Transverse colon (tissue), 4 donors: ENCODE measurements at regions of chr5 and their contacts with region 1.

Region 1: GRCh38 chr5:126594676-126595485 is at the start of gene ALDH7A1:
- DNase-seq: peak; percentile 90
- H3K4me3 ChIP-seq: peak within 1 kb of the TSS; percentile 9 to 67 (median 50)
- H3K27ac ChIP-seq: peak within 1 kb of the TSS; percentile 79 to 87 (median 83)
- H3K4me1 ChIP-seq: peaks cover 9 to 22% (median 14%) of the 10 kb centered on the region in 4 donors
- H3K27me3 ChIP-seq: no peaks in the 10 kb centered on the region
- CTCF ChIP-seq: peak in 4 of 5 experiments; percentile 21 to 38 (median 30)
- EP300 ChIP-seq: no peak
- POLR2A ChIP-seq: peak; percentile 51
- total RNA-seq, gene ALDH7A1: 9.8 to 33.3 (median 15.1) TPM

Region 2: DNA sequence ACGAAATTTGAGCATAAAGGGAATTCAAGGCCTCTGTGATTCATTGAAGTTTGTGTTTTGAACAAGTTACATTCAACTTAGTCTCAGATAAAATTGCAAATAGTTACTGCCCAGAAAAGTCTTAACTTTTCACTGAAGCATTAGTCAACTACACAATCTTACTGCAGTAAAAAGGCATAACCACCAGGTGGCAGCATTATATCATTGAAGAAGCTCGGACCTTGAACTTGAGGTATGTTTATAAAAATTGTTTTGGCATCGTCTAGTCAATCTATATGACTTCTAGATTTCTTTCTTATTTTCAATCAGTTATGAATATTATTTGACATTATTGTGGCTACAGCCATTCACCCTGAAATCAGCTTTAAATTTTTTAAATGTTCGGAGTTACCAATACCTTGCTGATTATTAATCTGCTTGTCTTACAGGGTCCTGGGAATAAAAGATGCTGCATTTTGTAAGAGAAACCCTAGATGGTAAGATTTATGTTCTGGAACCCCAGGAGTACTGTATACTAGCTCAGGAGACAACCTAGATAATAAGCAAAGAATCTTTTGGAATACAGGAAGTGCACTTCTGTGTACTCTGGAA is 255.6 kb before region 1 on chr5:
- in situ Hi-C with region 1: no loop called
- intact Hi-C with region 1: loop called (anchors 5 kb)
- DNase-seq: peak; percentile 38
- H3K4me3 ChIP-seq: no peak overlapping the region
- H3K27ac ChIP-seq: no peak overlapping the region
- H3K4me1 ChIP-seq: peaks cover 0 to 4% (median 0%) of the 10 kb centered on the region in 4 donors
- H3K27me3 ChIP-seq: no peaks in the 10 kb centered on the region
- CTCF ChIP-seq: peak; percentile 86 to 89 (median 88)
- EP300 ChIP-seq: no peak
- POLR2A ChIP-seq: no peak

Region 3: DNA sequence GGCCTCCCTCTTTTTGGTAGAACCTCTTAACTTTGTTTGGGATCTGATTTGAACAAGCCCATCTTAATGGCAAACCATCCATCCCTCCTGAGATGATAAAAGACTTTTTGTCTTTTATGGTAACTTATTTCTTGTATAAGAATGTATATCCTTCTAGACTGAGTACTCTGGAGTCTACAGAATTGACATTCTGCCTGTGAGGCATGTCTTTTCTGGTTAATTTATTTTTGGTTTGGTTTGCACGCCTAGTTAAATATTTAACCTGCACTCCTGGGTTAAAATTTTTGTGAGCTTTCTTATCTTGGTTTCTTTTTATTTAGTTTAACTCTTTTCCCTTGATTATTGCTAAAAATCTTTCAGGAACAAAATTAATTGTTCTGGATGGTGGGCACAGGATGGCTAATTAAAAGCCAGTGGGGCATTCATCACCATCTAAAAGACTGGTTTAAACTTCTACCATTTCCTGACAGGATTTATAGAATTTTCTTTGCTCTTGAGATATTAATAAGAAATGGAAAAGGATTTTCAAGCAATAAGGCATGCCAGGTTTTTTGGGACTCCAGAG is 56.2 kb after region 1 on chr5:
- in situ Hi-C with region 1: no loop called
- intact Hi-C with region 1: no loop called
- DNase-seq: no peak
- H3K4me3 ChIP-seq: no peak overlapping the region
- H3K27ac ChIP-seq: peak overlapping the region; percentile 7 to 88 (median 77)
- H3K4me1 ChIP-seq: peaks cover 0 to 53% (median 26%) of the 10 kb centered on the region in 4 donors
- H3K27me3 ChIP-seq: no peaks in the 10 kb centered on the region
- CTCF ChIP-seq: no peak
- EP300 ChIP-seq: no peak
- POLR2A ChIP-seq: no peak

Region 4: DNA sequence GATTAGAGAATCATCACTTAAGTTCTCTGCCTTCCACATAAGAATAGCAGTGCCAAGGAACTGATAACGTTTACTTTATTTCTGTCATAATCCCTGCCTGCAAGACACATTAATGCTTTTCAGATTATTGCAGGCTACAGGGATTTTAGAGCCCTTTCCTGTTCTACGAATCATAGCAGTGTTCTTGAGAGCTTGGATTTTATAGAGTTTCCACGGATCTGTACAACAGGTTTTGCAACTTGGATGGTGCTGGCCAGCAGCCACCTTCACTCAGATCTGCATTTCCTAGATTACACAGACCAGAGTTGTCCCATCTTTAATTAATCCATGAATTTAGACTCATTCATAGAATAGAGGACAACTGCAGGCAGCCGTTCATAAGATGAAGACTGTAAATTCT is 1526.8 kb after region 1 on chr5:
- in situ Hi-C with region 1: no loop called
- intact Hi-C with region 1: no loop called
- DNase-seq: peak; percentile 63
- H3K4me3 ChIP-seq: no peak overlapping the region
- H3K27ac ChIP-seq: no peak overlapping the region
- H3K4me1 ChIP-seq: no peaks in the 10 kb centered on the region
- H3K27me3 ChIP-seq: no peaks in the 10 kb centered on the region
- CTCF ChIP-seq: no peak
- EP300 ChIP-seq: no peak
- POLR2A ChIP-seq: no peak